ENCODE measurements at regions of chr2 and their contacts with region 1.

Region 1: DNA sequence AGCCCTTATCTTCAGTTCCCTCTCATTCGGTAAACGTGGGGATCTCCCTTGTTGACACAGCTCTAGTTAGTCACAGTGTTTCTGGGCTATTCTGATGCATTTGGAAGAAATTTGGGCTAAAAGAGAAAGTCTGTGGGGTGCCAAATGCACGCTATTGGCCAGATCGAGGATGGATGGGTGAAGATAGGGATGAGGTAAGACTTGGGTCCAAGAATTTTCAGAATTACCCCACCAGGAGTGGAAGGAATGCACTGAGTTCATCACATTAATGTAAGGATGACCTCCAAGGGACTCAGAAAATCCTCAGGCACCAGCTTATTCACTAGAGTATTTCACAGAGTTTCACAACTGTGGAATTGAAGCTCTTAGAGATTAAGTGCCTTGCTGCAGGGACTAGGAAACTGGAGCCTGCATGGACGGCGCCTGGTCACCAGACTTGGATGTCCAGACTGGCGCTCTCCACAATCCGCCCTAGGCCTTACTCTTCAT is 49.3 kb downstream of the NRP2 start:
- DNase-seq: peak; percentile 86
- H3K4me3 ChIP-seq: no peak overlapping the region
- H3K27ac ChIP-seq: peak overlapping the region; percentile 89
- H3K27me3 ChIP-seq: no peaks in the 10 kb centered on the region
- CTCF ChIP-seq: no peak

Region 2: GRCh38 chr2:205696331-205696923 is 35.2 kb before region 1 on chr2:
- CTCF ChIA-PET with region 1: interaction called, 3 read pairs
- POLR2A ChIA-PET with region 1: interaction called, 12 read pairs
- DNase-seq: no peak
- H3K4me3 ChIP-seq: no peak overlapping the region
- H3K27ac ChIP-seq: peak overlapping the region; percentile 72
- H3K27me3 ChIP-seq: no peaks in the 10 kb centered on the region
- CTCF ChIP-seq: peak; percentile 24; the same call in 1 of the 2 replicates

Measured in AG04450 (cell line).